ENCODE measurements at regions of chr6 and their contacts with region 1.

Region 1: DNA sequence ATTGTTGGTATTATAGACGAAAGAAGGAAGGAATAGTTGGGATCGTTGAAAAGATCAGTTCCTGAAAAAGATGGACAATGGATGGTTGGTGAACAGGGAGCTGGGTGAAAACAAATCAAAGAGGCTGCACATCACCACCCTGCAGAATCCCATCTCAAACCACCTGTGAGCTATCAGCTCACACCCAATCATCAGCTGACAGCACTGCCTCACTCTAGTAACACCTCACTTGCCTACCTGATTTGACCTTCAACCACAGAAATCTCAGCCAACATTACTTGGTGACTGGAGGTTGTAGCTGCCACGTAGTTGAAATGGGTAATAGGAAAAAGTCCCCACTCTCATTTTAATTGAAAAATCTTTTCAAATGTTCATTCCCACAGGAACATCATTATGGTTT is 101.8 kb upstream of the DST start:
- DNase-seq: no peak
- ATAC-seq: no peak; the same call in 1 of the 2 replicates
- H3K4me3 Mint-ChIP-seq: no peak overlapping the region
- H3K27ac Mint-ChIP-seq: peak overlapping the region; percentile 52
- H3K4me1 Mint-ChIP-seq: peaks cover 70% of the 10 kb centered on the region
- H3K27me3 Mint-ChIP-seq: no peaks in the 10 kb centered on the region
- CTCF ChIP-seq: no peak

Region 2: GRCh38 chr6:56625356-56625755 is 119.2 kb before region 1 on chr6:
- CTCF ChIA-PET with region 1: no interaction called
- POLR2A ChIA-PET with region 1: no interaction called
- DNase-seq: no peak
- ATAC-seq: no peak
- H3K4me3 Mint-ChIP-seq: no peak overlapping the region
- H3K27ac Mint-ChIP-seq: no peak overlapping the region
- H3K4me1 Mint-ChIP-seq: no peaks in the 10 kb centered on the region
- H3K27me3 Mint-ChIP-seq: no peaks in the 10 kb centered on the region
- CTCF ChIP-seq: no peak

Region 3: GRCh38 chr6:56757588-56757984 is 13.1 kb after region 1 on chr6:
- CTCF ChIA-PET with region 1: interaction called, 11 read pairs
- POLR2A ChIA-PET with region 1: no interaction called
- DNase-seq: no peak
- ATAC-seq: peak; percentile 74
- H3K4me3 Mint-ChIP-seq: no peak overlapping the region
- H3K27ac Mint-ChIP-seq: peak overlapping the region; percentile 15; the same call in 1 of the 2 replicates
- H3K4me1 Mint-ChIP-seq: peaks cover 75% of the 10 kb centered on the region
- H3K27me3 Mint-ChIP-seq: no peaks in the 10 kb centered on the region
- CTCF ChIP-seq: no peak